Heart right ventricle (tissue), 16 donors: ENCODE measurements at regions of chr2 and their contacts with region 1.

Region 1: GRCh38 chr2:205836477-205837221 is 154.3 kb downstream of the NRP2 start:
- DNase-seq: no peak
- ATAC-seq: peak in 2 of 8 donors; percentile 31 to 66
- H3K4me3 ChIP-seq: no peak overlapping the region
- H3K27ac ChIP-seq: no peak overlapping the region
- H3K4me1 ChIP-seq: peaks cover 0 to 26% (median 8%) of the 10 kb centered on the region in 9 donors
- H3K27me3 ChIP-seq: no peaks in the 10 kb centered on the region
- CTCF ChIP-seq: no peak

Region 2: DNA sequence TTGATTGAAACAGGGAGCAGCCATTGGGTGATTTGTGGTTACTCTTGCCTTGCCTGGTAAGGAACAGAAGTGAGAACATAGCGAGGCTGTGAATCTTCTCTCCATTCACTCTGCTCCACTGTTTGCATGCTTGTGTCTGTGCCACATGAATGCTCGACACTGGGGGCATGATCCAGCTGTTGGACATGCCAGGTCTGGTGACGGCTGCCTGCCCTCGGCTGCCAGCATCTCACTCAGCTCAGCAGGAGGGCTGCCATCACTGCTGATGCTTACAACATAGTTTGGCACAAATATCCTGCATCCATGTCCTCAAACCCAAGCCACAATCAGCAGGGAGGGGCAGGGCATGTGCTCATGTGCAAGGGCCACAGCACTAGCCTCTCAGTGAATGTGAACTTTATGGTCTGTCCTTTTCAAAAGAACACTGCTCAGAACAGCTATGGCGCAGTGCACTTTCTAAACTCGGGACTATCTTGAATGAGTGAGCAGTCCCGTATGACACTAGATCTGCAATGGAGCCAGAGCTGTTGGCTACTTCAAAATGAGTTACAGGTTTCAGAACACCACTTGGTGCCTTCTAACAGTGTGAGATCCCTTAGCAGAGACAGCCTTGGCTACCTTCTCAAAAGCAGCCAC is 28.0 kb before region 1 on chr2:
- intact Hi-C with region 1: no loop called
- DNase-seq: peak in 1 of 2 donors; percentile 25
- ATAC-seq: peak in 7 of 8 donors; percentile 18 to 81 (median 55)
- H3K4me3 ChIP-seq: no peak overlapping the region
- H3K27ac ChIP-seq: no peak overlapping the region
- H3K4me1 ChIP-seq: no peaks in the 10 kb centered on the region
- H3K27me3 ChIP-seq: no peaks in the 10 kb centered on the region
- CTCF ChIP-seq: no peak

Region 3: GRCh38 chr2:205852457-205852856 is 15.8 kb after region 1 on chr2:
- intact Hi-C with region 1: loop called in 1 of 10 experiments (anchors 1 kb)
- DNase-seq: peak in 1 of 2 donors; percentile 58
- ATAC-seq: peak; percentile 62 to 96 (median 86)
- H3K4me3 ChIP-seq: no peak overlapping the region
- H3K27ac ChIP-seq: no peak overlapping the region
- H3K4me1 ChIP-seq: peaks cover 0 to 3% (median 0%) of the 10 kb centered on the region in 9 donors
- H3K27me3 ChIP-seq: peaks cover 0 to 3% (median 0%) of the 10 kb centered on the region in 7 donors
- CTCF ChIP-seq: no peak